ENCODE measurements at regions of chr17 and their contacts with region 1.

Region 1: GRCh38 chr17:1628856-1629646 is 417 bp upstream of the SLC43A2 start:
- DNase-seq: peak; percentile 87
- ATAC-seq: peak; percentile 85
- H3K4me3 ChIP-seq: peak overlapping the region; percentile 71
- H3K27ac ChIP-seq: peak overlapping the region; percentile 64
- H3K4me1 ChIP-seq: peaks cover 5% of the 10 kb centered on the region
- H3K27me3 ChIP-seq: peaks cover 11% of the 10 kb centered on the region; the same call in 1 of the 2 replicates
- CTCF ChIP-seq: peak; percentile 42; the same call in 1 of the 2 replicates
- POLR2A ChIP-seq: 0 out of 2 replicates have a peak, but pooled peaks have one; percentile 23
- RAD21 ChIP-seq: peak; percentile 41

Region 2: DNA sequence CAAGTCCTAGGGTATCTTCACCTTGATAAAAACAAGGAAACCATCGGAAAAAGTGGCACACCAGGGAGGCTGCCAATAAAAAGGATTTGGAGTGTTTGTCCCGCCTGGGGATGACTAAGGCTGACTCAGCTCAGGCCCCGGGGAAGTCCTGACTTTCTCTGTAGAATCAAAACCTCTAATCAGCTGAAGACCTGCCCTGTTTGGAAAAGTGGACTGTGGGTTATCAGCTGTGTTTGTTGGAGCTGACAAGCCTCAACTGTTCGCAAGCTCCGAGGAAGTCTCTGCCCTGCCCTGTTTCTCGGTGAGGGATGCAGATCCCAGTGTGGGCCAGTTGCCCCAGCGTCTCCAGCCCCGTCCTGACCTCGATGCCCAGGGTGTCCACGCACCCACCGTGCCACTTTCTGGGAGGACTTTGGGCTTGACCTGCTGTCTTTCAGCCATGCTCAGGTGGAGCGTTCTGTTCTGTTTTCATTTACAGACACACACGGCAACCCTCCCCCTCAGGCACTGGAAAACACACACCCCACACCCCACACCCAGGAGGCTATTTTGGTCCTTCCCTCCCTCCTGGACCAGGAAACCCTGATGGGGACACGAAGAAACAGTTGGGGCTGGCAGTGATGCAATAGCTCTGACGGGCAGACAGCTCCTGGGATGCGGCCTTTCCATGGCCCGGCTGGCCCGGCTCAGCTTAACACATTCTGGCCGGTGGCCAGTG is 38.9 kb before region 1 on chr17:
- CTCF ChIA-PET with region 1: no interaction called
- POLR2A ChIA-PET with region 1: no interaction called
- dilution Hi-C with region 1: no loop called
- in situ Hi-C with region 1: no loop called
- intact Hi-C with region 1: loop called (anchors 5 kb)
- DNase-seq: peak; percentile 90
- ATAC-seq: peak; percentile 97
- H3K4me3 ChIP-seq: no peak overlapping the region
- H3K27ac ChIP-seq: peak overlapping the region; percentile 87
- H3K4me1 ChIP-seq: peaks cover 17% of the 10 kb centered on the region
- H3K27me3 ChIP-seq: no peaks in the 10 kb centered on the region
- CTCF ChIP-seq: no peak
- POLR2A ChIP-seq: no peak
- RAD21 ChIP-seq: no peak

Region 3: GRCh38 chr17:1793447-1793806 is 164.4 kb after region 1 on chr17:
- CTCF ChIA-PET with region 1: no interaction called
- POLR2A ChIA-PET with region 1: no interaction called
- dilution Hi-C with region 1: no loop called
- in situ Hi-C with region 1: no loop called
- intact Hi-C with region 1: no loop called
- DNase-seq: peak; percentile 16
- ATAC-seq: no peak
- H3K4me3 ChIP-seq: no peak overlapping the region
- H3K27ac ChIP-seq: no peak overlapping the region
- H3K4me1 ChIP-seq: 0 out of 2 replicates have a peak, but pooled peaks cover 1% of the 10 kb centered on the region
- H3K27me3 ChIP-seq: no peaks in the 10 kb centered on the region
- CTCF ChIP-seq: no peak
- POLR2A ChIP-seq: no peak
- RAD21 ChIP-seq: no peak

Region 4: DNA sequence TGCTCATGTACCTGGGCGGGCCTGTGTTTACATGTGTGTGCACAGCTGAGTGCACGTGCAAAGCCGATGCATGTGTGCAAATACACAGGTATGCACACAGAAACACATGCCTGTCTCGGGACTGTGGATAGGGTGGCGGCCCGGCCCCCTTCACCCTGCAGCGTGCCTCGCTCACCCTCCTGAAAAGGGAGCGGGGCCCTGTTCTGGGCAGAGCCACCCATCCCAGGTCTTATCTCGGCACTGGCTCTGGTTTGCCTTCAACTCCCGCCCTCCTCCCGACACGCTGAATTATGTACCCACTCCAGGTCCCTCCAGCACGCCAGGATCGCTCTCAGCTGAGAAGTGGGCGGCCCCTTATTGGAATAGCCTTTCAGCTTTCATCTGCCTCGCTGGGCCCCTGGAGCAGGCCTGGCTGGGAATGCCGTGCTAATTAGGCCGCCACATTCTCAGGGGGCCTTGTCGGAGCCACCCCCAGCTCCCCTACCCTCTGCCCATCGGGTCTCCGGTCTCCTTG is 318.2 kb after region 1 on chr17:
- CTCF ChIA-PET with region 1: no interaction called
- POLR2A ChIA-PET with region 1: no interaction called
- dilution Hi-C with region 1: no loop called
- in situ Hi-C with region 1: no loop called
- intact Hi-C with region 1: no loop called
- DNase-seq: no peak
- ATAC-seq: no peak
- H3K4me3 ChIP-seq: no peak overlapping the region
- H3K27ac ChIP-seq: no peak overlapping the region
- H3K4me1 ChIP-seq: no peaks in the 10 kb centered on the region
- H3K27me3 ChIP-seq: peaks cover 26% of the 10 kb centered on the region
- CTCF ChIP-seq: no peak
- POLR2A ChIP-seq: no peak
- RAD21 ChIP-seq: no peak